Naive thymus-derived CD8-positive, alpha-beta T cell (primary cell): ENCODE measurements at regions of chr16 and their contacts with region 1.

Region 1: DNA sequence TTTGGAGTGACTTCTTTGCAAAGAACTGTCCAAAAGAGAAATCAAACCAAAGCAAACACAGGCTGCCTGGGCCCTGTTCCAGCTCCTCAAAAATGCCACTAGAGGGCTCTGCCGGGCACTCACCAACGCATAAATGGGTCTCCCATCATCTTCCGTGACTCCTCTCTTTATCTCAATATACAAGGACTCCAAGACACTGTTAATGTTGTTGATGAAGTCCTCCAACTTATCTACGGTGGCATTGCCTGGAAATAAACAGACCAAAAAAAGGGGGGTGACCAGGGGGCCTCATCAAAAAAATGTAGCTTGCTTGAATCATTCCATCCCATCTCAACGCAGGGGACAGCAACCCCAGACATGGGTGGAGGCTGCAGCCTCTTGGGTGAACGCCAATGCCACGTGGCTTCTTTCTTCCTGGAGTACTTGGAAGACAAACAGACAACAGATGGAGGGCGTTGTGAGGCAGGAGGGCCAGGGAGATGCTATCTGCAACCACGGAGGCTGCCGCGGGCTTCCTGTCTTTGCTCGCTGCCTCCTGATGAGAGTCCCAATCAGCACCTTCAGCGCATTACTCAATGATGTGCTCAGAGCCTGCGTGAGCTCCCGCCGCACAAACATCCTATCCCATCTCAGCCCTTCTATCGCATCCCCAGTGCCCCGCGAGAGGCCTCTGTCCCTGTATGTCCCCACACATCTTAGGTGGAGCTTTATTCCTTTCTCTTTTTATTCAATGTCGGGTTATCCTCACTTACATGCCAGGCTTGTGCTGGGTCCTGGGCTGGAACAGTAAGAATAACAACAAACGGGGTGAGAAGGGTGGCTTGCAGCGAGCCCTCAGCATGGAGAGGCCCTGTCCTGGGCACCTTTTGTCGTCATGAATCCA is 32.0 kb downstream of the KDM8 start:
- DNase-seq: peak; percentile 73 to 97 (median 94)
- ATAC-seq: peak; percentile 60 to 77
- H3K4me3 Mint-ChIP-seq: peak overlapping the region; percentile 66 to 91 (median 84)
- H3K27ac Mint-ChIP-seq: peak overlapping the region; percentile 98 to 100 (median 98)
- H3K4me1 Mint-ChIP-seq: peaks cover 57 to 99% (median 96%) of the 10 kb centered on the region in 4 donors
- H3K27me3 Mint-ChIP-seq: no peaks in the 10 kb centered on the region

Region 2: GRCh38 chr16:27195941-27196595 is 39.2 kb before region 1 on chr16:
- POLR2A ChIA-PET with region 1: interaction called, 43 read pairs
- DNase-seq: peak in 9 of 10 donors; percentile 16 to 90 (median 75)
- ATAC-seq: peak; percentile 89 to 94
- H3K4me3 Mint-ChIP-seq: peak overlapping the region; percentile 52 to 89 (median 77)
- H3K27ac Mint-ChIP-seq: peak overlapping the region; percentile 92 to 99 (median 98)
- H3K4me1 Mint-ChIP-seq: peaks cover 35 to 79% (median 71%) of the 10 kb centered on the region in 4 donors
- H3K27me3 Mint-ChIP-seq: no peaks in the 10 kb centered on the region

Region 3: DNA sequence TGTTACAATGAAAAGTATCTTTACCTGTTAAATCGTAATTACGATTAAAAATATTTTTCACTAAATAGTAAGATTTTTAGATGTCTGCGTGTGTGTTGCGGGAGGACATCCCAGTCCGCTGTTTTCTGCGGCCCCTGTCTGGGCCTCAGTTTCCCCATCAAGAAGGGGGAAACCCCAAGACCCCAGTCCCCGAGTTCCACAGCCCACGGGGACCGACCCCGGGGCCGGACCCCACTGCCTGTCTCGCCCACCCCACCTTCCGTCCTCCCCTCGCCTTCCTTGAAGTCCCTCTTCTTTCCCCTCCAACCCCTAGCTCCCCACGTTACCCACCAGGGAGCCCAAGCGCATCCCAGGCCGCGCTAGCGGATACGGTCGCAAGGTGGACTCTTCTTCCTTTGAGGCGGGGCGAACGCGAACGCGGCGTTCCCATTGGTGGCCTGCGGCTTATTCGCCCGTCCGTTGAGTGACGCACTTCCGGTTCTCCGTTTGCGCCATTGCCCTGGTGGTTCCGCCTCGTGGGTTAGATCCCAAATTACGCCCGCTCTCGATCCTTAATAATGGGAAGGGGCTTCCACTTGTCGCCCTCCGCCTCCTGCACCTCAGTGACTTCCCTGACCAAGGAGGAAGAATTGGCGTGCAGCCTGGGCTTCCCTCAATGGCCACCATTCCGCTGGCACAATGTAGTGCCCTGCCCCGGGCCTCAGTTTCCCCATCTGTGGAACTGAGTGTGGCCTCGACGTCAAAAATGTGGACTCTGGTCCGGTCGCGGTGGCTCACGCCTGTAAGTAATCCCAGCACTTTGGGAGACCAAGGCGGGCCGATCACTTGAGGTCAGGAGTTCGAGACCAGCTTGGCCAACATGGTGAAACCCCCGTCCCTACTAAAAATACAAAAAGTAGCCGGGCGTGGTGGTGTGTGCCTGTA is 33.3 kb after region 1 on chr16 and contains the start of gene NSMCE1:
- POLR2A ChIA-PET with region 1: interaction called, 54 read pairs
- DNase-seq: peak; percentile 85 to 98 (median 94)
- ATAC-seq: peak; percentile 98 to 99
- H3K4me3 Mint-ChIP-seq: peak within 1 kb of the TSS; percentile 92 to 100 (median 98)
- H3K27ac Mint-ChIP-seq: peak within 1 kb of the TSS; percentile 98 to 100 (median 99)
- H3K4me1 Mint-ChIP-seq: peaks cover 40 to 82% (median 73%) of the 10 kb centered on the region in 4 donors
- H3K27me3 Mint-ChIP-seq: no peaks in the 10 kb centered on the region
- polyA plus RNA-seq, gene NSMCE1: 177 to 209 (median 185) TPM

Region 4: DNA sequence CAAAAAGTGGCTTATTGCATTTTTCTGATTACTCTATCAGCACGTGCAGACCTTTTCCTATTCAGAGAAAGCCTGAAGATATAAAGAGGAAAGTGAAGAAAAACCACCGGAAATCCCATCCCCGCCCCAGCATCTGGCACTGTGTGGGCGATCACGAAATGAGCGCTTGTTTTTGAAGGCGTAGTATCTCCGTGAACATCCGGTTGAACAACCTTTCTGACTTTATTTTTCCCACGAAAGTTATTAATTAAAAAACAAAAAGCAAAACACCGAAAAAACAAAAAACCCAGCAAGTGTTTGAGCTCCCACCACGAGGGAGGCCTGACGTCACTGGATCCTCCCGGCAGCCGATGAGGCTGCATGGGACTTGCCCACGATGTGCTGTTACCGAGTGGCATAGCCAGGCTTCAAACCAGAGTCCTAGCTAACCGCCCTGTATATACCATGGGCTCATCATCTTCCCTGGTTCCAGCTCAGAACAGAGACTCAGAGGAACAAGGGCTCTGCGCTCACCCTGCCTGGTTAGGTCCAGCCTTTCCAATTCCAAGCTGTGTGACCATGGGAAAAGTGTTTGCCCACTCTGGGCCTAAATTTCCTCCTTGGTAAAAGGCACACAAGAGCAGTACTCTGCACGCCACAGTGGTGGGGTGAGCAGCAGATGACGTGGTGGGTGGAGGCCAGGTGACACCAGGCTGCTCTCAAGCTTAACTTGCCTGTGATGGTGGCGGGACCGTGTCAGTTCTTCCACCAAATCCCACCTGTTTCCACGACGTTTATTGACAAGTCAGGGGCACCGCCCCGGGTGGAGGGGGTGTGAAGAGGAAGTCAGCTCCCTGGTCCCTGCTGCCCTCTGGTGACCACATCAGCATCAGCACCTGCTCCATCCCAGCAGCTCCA is 132.4 kb after region 1 on chr16:
- POLR2A ChIA-PET with region 1: interaction called, 156 read pairs
- DNase-seq: peak; percentile 73 to 95 (median 92)
- ATAC-seq: peak; percentile 82 to 85
- H3K4me3 Mint-ChIP-seq: peak overlapping the region; percentile 49 to 75 (median 71)
- H3K27ac Mint-ChIP-seq: peak overlapping the region in 9 of 10 donors; percentile 92 to 100 (median 99)
- H3K4me1 Mint-ChIP-seq: peaks cover 23 to 78% (median 55%) of the 10 kb centered on the region in 4 donors
- H3K27me3 Mint-ChIP-seq: no peaks in the 10 kb centered on the region

Region 5: DNA sequence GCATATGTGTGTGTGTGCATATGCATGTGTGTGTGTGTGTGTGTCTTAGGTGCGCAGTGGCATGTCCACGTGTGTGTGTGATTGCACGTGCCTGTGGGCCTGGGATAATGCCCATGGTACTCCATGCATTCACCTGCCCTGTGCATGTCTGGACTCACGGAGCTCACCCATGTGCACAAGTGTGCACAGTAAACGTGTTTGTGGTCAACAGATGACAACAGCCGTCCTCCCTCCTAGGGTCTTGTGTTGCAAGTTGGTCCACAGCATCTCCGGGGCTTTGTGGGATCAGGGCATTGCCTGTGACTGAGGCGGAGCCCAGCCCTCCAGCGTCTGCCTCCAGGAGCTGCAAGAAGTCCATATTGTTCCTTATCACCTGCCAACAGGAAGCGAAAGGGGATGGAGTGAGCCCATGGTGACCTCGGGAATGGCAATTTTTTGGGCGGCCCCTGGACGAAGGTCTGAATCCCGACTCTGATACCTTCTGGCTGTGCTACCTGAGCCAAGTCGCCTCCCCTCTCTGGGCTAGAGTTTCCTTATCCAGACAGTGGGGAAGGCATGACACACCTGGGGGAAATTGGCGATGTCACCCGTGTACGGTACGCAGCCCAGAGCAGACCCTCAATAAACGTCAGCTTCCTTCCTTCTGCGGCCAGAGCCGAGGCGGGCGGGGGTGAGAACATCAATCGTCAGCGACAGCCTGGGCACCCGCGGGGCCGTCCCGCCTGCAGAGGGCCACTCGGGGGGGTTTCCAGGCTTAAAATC is 214.3 kb after region 1 on chr16:
- POLR2A ChIA-PET with region 1: interaction called, 27 read pairs
- DNase-seq: peak; percentile 65 to 90 (median 84)
- ATAC-seq: peak; percentile 61 to 78
- H3K4me3 Mint-ChIP-seq: peak overlapping the region; percentile 58 to 86 (median 74)
- H3K27ac Mint-ChIP-seq: peak overlapping the region; percentile 81 to 99 (median 96)
- H3K4me1 Mint-ChIP-seq: peaks cover 48 to 93% (median 88%) of the 10 kb centered on the region in 4 donors
- H3K27me3 Mint-ChIP-seq: no peaks in the 10 kb centered on the region